ENCODE measurements at regions of chr16 and their contacts with region 1.

Region 1: DNA sequence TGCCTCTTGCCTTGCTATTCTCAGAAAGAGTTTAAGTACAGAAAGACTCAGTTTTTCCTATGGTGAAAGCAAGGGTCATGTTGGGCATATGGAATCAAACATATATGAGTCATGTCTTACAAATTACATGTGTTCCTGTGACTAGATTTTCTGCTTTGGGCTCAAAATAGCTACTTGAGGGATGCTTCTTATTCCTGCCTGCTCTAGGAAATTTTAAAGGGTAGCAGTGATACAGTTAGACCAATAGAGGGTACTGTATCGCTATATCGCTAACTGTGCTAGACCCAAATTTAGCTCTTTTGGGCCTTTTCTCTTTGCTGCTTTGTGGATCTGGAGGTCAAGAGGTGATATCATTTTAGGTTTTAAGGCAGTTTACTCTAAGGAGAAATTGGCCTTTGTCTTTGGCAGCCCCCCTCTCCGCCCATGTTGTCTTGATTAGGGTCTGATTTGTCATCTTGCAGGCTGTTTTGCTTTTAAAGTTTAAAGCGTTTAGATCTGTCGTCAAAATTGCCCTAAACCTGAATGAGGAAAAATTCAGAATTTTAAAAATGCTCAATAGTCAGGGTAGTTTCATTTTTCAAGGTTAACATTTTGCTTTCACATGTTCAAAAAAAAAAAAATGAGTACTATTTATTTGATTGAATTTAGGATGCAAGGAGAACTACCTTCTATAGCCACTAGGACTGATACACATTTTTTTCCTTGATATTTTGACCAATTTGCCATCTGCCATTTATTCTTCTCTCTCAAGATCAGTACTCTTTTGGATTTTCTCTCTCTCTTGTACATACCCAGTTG is 8.8 kb downstream of the NFATC3 start:
- DNase-seq: no peak
- H3K4me3 Mint-ChIP-seq: peak overlapping the region; percentile 21
- H3K27ac Mint-ChIP-seq: peak overlapping the region; percentile 78
- H3K4me1 Mint-ChIP-seq: peaks cover 79% of the 10 kb centered on the region
- H3K27me3 Mint-ChIP-seq: no peaks in the 10 kb centered on the region

Region 2: DNA sequence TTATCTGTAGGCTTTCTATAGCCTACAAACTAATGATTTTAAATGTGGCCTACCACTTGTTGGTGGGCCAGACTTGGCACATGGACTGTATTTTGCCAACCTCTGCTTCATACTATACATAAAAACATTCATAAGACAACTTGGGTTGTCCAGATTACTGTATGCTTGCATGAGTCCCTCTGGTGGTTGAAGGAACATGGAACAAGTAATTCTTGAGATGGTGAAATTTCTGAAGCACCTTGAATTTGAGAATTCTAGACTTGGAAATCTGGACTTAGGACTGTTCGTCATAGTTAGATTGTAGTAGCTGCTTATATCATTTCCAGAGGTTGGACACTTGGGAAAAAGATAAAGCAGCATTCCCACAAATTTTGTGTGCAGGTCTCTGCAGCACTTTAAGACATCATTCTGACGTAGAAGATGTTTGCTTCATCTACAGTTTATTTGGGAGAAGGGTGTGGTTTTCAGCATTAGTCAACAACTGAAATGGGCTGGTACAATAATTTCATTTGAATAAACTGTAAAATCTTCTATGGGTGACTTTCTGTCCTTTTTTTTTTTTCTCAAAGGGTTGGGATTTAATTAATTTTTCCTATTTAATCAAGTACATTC is 22.3 kb after region 1 on chr16:
- intact Hi-C with region 1: loop called (anchors 1 kb)
- DNase-seq: no peak
- H3K4me3 Mint-ChIP-seq: no peak overlapping the region
- H3K27ac Mint-ChIP-seq: peak overlapping the region; percentile 34
- H3K4me1 Mint-ChIP-seq: peaks cover 73% of the 10 kb centered on the region
- H3K27me3 Mint-ChIP-seq: no peaks in the 10 kb centered on the region

Region 3: DNA sequence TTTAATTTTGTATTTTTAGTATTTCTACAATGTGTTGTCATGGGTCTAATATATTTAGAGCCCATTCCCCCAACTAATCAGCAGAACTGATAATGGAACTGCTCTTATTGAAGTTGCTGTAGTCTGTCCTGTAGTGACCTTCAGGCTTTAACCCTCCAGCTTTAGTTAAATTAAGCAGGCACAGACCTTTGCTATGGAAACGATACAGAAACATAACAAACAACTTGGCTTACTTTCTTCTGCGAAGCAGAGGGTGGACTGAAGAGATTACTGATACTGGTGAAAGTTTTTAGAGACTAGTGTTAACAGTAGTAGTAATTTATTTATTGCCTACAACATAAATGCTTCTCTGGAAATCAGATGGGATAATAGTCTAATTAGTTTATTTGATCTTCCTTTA is 52.6 kb after region 1 on chr16:
- intact Hi-C with region 1: loop called (anchors 5 kb)
- DNase-seq: no peak
- H3K4me3 Mint-ChIP-seq: no peak overlapping the region
- H3K27ac Mint-ChIP-seq: no peak overlapping the region
- H3K4me1 Mint-ChIP-seq: peaks cover 15% of the 10 kb centered on the region
- H3K27me3 Mint-ChIP-seq: no peaks in the 10 kb centered on the region

Region 4: GRCh38 chr16:68229431-68230198 is 135.6 kb after region 1 on chr16:
- intact Hi-C with region 1: loop called (anchors 2 kb)
- DNase-seq: no peak
- H3K4me3 Mint-ChIP-seq: no peak overlapping the region
- H3K27ac Mint-ChIP-seq: peak overlapping the region; percentile 63
- H3K4me1 Mint-ChIP-seq: peaks cover 48% of the 10 kb centered on the region
- H3K27me3 Mint-ChIP-seq: no peaks in the 10 kb centered on the region